Panc1 (cell line): ENCODE measurements at regions of chr6 and their contacts with region 1.

Region 1: GRCh38 chr6:142401838-142402237 is 100.0 kb downstream of the ADGRG6 start:
- DNase-seq: no peak
- ATAC-seq: no peak
- H3K4me3 ChIP-seq: no peak overlapping the region
- H3K27ac ChIP-seq: peak overlapping the region; percentile 40; the same call in 1 of the 2 replicates
- H3K4me1 ChIP-seq: no peaks in the 10 kb centered on the region; the same call in 1 of the 2 replicates
- H3K27me3 ChIP-seq: no peaks in the 10 kb centered on the region
- CTCF ChIP-seq: no peak

Region 2: DNA sequence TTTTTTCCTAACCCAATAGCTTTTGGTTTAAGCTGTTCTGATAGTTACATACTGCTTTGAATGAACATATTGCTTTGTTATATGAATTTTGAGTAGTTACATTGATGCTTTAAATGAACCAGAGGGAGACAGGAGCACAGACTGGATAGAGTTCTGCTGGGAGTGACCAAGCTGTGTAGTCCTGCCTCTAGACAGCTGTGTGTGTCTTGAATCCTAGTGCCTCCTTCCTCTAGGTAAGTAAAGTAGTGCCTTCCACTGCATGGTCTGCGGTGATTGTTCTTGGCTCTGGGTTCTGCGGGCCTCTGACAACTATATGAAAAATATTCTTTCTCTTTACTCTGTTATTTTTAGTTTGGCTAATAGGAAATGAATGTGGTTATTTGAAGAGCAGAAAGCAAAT is 146.1 kb before region 1 on chr6:
- CTCF ChIA-PET with region 1: no interaction called
- POLR2A ChIA-PET with region 1: no interaction called
- in situ Hi-C with region 1: no loop called
- intact Hi-C with region 1: loop called (anchors 1 kb)
- DNase-seq: no peak
- ATAC-seq: no peak
- H3K4me3 ChIP-seq: no peak overlapping the region
- H3K27ac ChIP-seq: no peak overlapping the region
- H3K4me1 ChIP-seq: no peaks in the 10 kb centered on the region
- H3K27me3 ChIP-seq: no peaks in the 10 kb centered on the region
- CTCF ChIP-seq: no peak

Region 3: GRCh38 chr6:142902636-142903053 is 500.8 kb after region 1 on chr6:
- CTCF ChIA-PET with region 1: no interaction called
- POLR2A ChIA-PET with region 1: no interaction called
- in situ Hi-C with region 1: no loop called
- intact Hi-C with region 1: no loop called
- DNase-seq: peak; percentile 87
- ATAC-seq: peak; percentile 94
- H3K4me3 ChIP-seq: no peak overlapping the region
- H3K27ac ChIP-seq: peak overlapping the region; percentile 1; the same call in 1 of the 2 replicates
- H3K4me1 ChIP-seq: peaks cover 5% of the 10 kb centered on the region
- H3K27me3 ChIP-seq: no peaks in the 10 kb centered on the region
- CTCF ChIP-seq: no peak